ENCODE measurements at regions of chr14 and their contacts with region 1.

Region 1: GRCh38 chr14:92585981-92586937 is 72.7 kb downstream of the RIN3 start:
- DNase-seq: peak; percentile 61 to 79 (median 68)
- H3K4me3 ChIP-seq: no peak overlapping the region
- H3K4me3 Mint-ChIP-seq: peak overlapping the region; percentile 55 to 90 (median 81)
- H3K27ac ChIP-seq: peak overlapping the region; percentile 52
- H3K27ac Mint-ChIP-seq: peak overlapping the region; percentile 91 to 98 (median 95)
- H3K4me1 ChIP-seq: peaks cover 96% of the 10 kb centered on the region
- H3K4me1 Mint-ChIP-seq: peaks cover 68 to 99% (median 86%) of the 10 kb centered on the region in 4 donors
- H3K27me3 ChIP-seq: no peaks in the 10 kb centered on the region
- H3K27me3 Mint-ChIP-seq: no peaks in the 10 kb centered on the region

Region 2: GRCh38 chr14:92513204-92513973 is 72.9 kb before region 1 on chr14 and contains the start of gene RIN3:
- CTCF ChIA-PET with region 1: no interaction called
- POLR2A ChIA-PET with region 1: no interaction called
- intact Hi-C with region 1: loop called (anchors 5 kb)
- DNase-seq: peak in 4 of 5 donors; percentile 23 to 44 (median 33)
- H3K4me3 ChIP-seq: peak within 1 kb of the TSS in 1 of 2 donors; percentile 58
- H3K4me3 Mint-ChIP-seq: peak within 1 kb of the TSS; percentile 54 to 84 (median 76)
- H3K27ac ChIP-seq: peak within 1 kb of the TSS; percentile 28
- H3K27ac Mint-ChIP-seq: peak within 1 kb of the TSS in 1 of 7 donors; percentile 74
- H3K4me1 ChIP-seq: peaks cover 26% of the 10 kb centered on the region
- H3K4me1 Mint-ChIP-seq: peaks cover 13 to 39% (median 28%) of the 10 kb centered on the region in 4 donors
- H3K27me3 ChIP-seq: no peaks in the 10 kb centered on the region
- H3K27me3 Mint-ChIP-seq: peaks cover 0 to 2% of the 10 kb centered on the region in 2 donors
- total RNA-seq, gene RIN3: 66.9 to 74.9 TPM

Region 3: GRCh38 chr14:92538412-92538985 is 47.8 kb before region 1 on chr14:
- CTCF ChIA-PET with region 1: no interaction called
- POLR2A ChIA-PET with region 1: interaction called, 3 read pairs
- intact Hi-C with region 1: loop called (anchors 2 kb)
- DNase-seq: no peak
- H3K4me3 ChIP-seq: no peak overlapping the region
- H3K4me3 Mint-ChIP-seq: no peak overlapping the region
- H3K27ac ChIP-seq: no peak overlapping the region
- H3K27ac Mint-ChIP-seq: peak overlapping the region in 2 of 7 donors; percentile 5 to 36
- H3K4me1 ChIP-seq: peaks cover 15% of the 10 kb centered on the region
- H3K4me1 Mint-ChIP-seq: peaks cover 14 to 41% (median 26%) of the 10 kb centered on the region in 4 donors
- H3K27me3 ChIP-seq: no peaks in the 10 kb centered on the region
- H3K27me3 Mint-ChIP-seq: no peaks in the 10 kb centered on the region

Region 4: GRCh38 chr14:92551044-92551841 is 35.0 kb before region 1 on chr14:
- CTCF ChIA-PET with region 1: interaction called, 3 read pairs
- POLR2A ChIA-PET with region 1: interaction called, 12 read pairs
- intact Hi-C with region 1: no loop called
- DNase-seq: peak in 3 of 5 donors; percentile 18 to 28 (median 23)
- H3K4me3 ChIP-seq: no peak overlapping the region
- H3K4me3 Mint-ChIP-seq: no peak overlapping the region
- H3K27ac ChIP-seq: no peak overlapping the region
- H3K27ac Mint-ChIP-seq: peak overlapping the region in 1 of 7 donors; percentile 12
- H3K4me1 ChIP-seq: peaks cover 25% of the 10 kb centered on the region
- H3K4me1 Mint-ChIP-seq: peaks cover 15 to 37% (median 23%) of the 10 kb centered on the region in 4 donors
- H3K27me3 ChIP-seq: no peaks in the 10 kb centered on the region
- H3K27me3 Mint-ChIP-seq: no peaks in the 10 kb centered on the region

Region 5: DNA sequence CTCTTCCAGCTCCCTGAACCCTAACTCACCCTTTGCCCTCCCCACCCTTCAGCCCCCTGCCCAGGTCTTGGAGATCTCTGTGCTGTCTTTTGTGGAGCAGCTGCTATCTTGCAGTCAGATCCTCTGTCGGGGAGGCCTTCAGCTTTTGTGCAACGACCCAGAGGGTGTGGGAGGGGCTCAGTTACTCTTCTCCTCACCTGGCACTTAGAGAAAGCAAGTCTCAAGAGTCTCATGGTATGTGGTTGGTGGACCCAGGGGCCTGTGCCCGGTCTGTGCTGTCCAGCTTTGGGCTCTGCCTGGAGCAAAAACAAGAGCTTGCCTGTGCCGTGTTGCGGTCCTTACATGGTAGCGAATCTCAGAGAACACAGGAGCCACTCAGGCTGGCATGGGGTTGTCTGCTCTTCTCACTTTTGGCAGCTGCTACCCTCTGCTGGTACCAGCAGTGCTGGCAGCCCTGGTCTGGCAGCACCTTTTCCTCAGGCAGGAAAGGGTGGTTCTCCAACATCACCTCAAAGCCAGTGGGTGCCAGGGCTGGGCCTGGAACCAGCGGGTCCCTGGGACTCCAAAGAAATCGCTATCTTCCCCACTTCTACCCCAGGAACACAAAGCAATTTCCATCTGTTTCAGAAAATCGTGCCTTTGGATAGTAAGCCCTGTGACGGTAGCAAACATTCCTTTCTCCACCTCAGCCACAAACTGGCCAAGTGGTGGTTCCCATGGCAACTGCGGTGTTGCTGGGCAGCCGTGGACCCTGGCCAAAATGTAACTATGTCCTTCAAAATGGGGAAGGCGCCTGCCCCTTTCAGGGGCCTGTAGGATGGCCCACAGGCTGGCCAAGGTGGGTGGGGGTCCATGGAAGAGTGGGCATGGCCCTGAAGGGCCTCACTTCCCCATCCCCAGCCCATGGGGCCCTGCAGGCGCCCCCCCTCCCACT is 17.3 kb after region 1 on chr14:
- CTCF ChIA-PET with region 1: interaction called, 27 read pairs
- POLR2A ChIA-PET with region 1: interaction called, 9 read pairs
- intact Hi-C with region 1: no loop called
- DNase-seq: peak in 4 of 5 donors; percentile 58 to 67 (median 61)
- H3K4me3 ChIP-seq: no peak overlapping the region
- H3K4me3 Mint-ChIP-seq: peak overlapping the region in 2 of 8 donors; percentile 34 to 50
- H3K27ac ChIP-seq: no peak overlapping the region
- H3K27ac Mint-ChIP-seq: peak overlapping the region in 5 of 7 donors; percentile 24 to 52 (median 43)
- H3K4me1 ChIP-seq: peaks cover 12% of the 10 kb centered on the region
- H3K4me1 Mint-ChIP-seq: peaks cover 11 to 16% (median 14%) of the 10 kb centered on the region in 4 donors
- H3K27me3 ChIP-seq: no peaks in the 10 kb centered on the region
- H3K27me3 Mint-ChIP-seq: peaks cover 0 to 2% of the 10 kb centered on the region in 2 donors

Region 6: DNA sequence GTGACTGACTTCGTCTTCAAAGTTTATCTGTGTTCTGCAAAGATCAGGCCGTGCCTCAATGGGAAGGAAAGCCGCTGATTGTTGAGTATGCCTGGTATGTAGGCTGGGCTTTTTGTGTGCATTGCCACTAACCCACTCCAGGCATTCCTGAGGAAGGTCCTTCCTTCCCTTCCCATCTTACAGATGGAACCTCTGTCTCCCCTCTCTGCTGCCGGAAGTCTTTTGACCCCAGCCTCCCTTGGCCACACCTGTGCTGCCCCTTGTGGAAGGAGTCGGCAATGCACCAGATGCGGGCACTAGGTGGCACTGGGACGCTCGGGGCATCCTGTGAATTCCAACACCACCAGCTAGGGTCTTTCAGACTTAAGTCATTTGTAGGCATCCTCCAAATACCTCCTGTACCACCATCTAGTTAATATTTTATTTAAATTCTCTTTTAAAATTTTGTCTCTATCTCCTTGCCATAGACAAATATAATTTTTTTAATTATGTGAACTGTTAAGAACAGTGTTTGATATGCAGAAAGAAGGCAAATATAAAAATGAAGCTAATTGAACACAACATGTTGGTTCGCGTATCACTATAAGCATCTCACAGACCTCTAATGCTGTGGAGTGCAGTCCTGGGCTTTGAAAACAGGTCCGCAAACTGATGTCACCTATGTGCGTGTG is 26.9 kb after region 1 on chr14:
- CTCF ChIA-PET with region 1: interaction called, 8 read pairs
- POLR2A ChIA-PET with region 1: interaction called, 7 read pairs
- intact Hi-C with region 1: loop called (anchors 1 kb)
- DNase-seq: peak; percentile 50 to 62 (median 55)
- H3K4me3 ChIP-seq: no peak overlapping the region
- H3K4me3 Mint-ChIP-seq: peak overlapping the region in 2 of 8 donors; percentile 15 to 33
- H3K27ac ChIP-seq: no peak overlapping the region
- H3K27ac Mint-ChIP-seq: peak overlapping the region; percentile 22 to 91 (median 63)
- H3K4me1 ChIP-seq: peaks cover 52% of the 10 kb centered on the region
- H3K4me1 Mint-ChIP-seq: peaks cover 32 to 72% (median 52%) of the 10 kb centered on the region in 4 donors
- H3K27me3 ChIP-seq: no peaks in the 10 kb centered on the region
- H3K27me3 Mint-ChIP-seq: no peaks in the 10 kb centered on the region

Region 7: GRCh38 chr14:92651106-92651757 is 65.0 kb after region 1 on chr14:
- CTCF ChIA-PET with region 1: interaction called, 3 read pairs
- POLR2A ChIA-PET with region 1: interaction called, 41 read pairs
- intact Hi-C with region 1: no loop called
- DNase-seq: peak; percentile 82 to 95 (median 85)
- H3K4me3 ChIP-seq: peak overlapping the region; percentile 47 to 58
- H3K4me3 Mint-ChIP-seq: peak overlapping the region; percentile 92 to 99 (median 98)
- H3K27ac ChIP-seq: peak overlapping the region; percentile 84
- H3K27ac Mint-ChIP-seq: peak overlapping the region; percentile 96 to 100 (median 99)
- H3K4me1 ChIP-seq: peaks cover 80% of the 10 kb centered on the region
- H3K4me1 Mint-ChIP-seq: peaks cover 51 to 94% (median 67%) of the 10 kb centered on the region in 4 donors
- H3K27me3 ChIP-seq: no peaks in the 10 kb centered on the region
- H3K27me3 Mint-ChIP-seq: no peaks in the 10 kb centered on the region

Measured in CD4-positive, alpha-beta memory T cell (primary cell).